ENCODE measurements at regions of chr3 and their contacts with region 1.

Region 1: DNA sequence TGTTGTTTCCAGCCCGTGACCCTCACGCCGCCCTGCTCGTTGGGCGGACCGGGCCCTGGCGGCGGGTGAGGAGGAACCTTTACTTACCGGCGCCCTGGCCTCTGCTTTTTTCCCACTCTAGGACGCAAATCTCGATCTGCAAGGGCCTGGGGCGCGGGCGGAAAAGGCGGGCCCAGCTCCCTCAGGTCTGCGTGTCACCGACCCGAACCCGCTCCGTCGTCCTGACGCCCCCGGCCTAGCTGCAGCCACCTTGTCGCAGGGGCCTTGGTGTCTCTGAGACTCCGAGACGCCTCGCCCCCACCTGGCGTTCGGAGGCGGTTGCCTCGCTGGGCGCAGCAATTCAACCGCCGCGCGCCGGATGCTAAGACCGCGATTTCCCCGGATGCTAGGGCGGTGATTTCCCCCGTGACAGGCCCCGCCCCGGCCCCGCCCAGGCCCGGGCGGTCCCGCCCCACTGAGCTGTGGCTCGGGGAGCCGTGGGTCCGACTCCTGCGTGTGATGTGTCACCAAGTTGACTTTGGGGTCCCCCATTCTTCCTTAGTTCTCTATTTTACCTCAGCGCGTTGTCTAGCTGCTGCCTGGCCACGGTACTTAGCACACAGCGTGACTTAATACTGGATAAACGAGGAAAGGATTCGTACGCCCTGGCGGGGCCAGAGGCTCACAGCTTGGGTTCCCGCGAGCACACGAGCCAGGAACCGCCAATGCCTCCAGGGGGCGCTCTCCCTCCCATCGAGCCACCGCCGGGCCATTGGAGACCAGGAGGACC is at the start of gene RPL39L:
- DNase-seq: peak; percentile 96
- ATAC-seq: peak; percentile 96
- H3K4me3 Mint-ChIP-seq: peak within 1 kb of the TSS; percentile 83
- H3K27ac Mint-ChIP-seq: peak within 1 kb of the TSS; percentile 97
- H3K4me1 Mint-ChIP-seq: peaks cover 19% of the 10 kb centered on the region
- H3K27me3 Mint-ChIP-seq: no peaks in the 10 kb centered on the region
- CTCF ChIP-seq: peak; percentile 97
- total RNA-seq, gene RPL39L: 12.1 to 16.2 TPM

Region 2: DNA sequence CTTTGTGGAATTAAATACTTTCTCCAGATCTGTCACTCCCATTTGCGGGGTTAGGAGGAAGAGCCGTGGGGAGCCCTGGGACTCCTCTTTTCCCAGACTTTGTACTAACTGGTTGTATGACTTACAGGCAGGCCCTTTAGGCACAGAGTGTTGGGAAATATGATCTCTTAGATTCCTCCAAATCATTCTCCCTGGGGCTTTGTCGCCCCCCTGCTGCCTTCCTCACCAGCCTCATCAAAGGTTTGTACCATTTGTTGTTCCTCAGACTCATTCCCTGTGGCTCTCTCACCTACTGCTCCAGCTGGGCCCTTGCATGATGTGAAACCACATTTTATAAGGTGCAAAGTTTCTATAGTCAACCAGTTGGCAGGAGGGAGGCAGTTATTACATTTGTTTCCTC is 651.5 kb before region 1 on chr3:
- CTCF ChIA-PET with region 1: no interaction called
- POLR2A ChIA-PET with region 1: no interaction called
- intact Hi-C with region 1: no loop called
- DNase-seq: no peak
- ATAC-seq: no peak
- H3K4me3 Mint-ChIP-seq: no peak overlapping the region
- H3K27ac Mint-ChIP-seq: no peak overlapping the region
- H3K4me1 Mint-ChIP-seq: peaks cover 7% of the 10 kb centered on the region
- H3K27me3 Mint-ChIP-seq: no peaks in the 10 kb centered on the region
- CTCF ChIP-seq: no peak

Region 3: GRCh38 chr3:187101184-187102072 is 37.9 kb before region 1 on chr3:
- CTCF ChIA-PET with region 1: interaction called, 29 read pairs
- POLR2A ChIA-PET with region 1: no interaction called
- intact Hi-C with region 1: no loop called
- DNase-seq: peak; percentile 66
- ATAC-seq: peak; percentile 73
- H3K4me3 Mint-ChIP-seq: no peak overlapping the region
- H3K27ac Mint-ChIP-seq: peak overlapping the region; percentile 26
- H3K4me1 Mint-ChIP-seq: peaks cover 29% of the 10 kb centered on the region
- H3K27me3 Mint-ChIP-seq: no peaks in the 10 kb centered on the region
- CTCF ChIP-seq: no peak

Region 4: DNA sequence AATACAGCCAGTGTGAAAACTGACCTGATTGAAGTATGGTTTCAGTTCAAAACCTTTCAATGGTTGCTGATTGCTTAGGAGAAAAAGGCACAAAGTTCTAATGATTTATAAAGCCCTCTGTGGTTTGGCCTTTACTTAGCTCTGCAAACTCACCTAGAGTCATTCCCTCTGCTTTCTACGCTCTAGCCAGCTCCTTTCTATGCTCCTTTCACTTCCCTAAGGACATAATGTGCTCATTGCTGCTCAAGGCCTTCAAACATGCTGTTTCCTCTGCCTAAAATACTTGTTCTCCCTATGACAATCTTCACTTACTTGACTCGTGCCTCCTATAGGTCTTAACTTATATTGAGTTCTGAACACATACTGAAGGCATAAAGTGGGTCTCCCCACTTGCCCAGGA is 19.0 kb before region 1 on chr3:
- CTCF ChIA-PET with region 1: interaction called, 10 read pairs
- POLR2A ChIA-PET with region 1: no interaction called
- intact Hi-C with region 1: no loop called
- DNase-seq: no peak
- ATAC-seq: no peak
- H3K4me3 Mint-ChIP-seq: no peak overlapping the region
- H3K27ac Mint-ChIP-seq: no peak overlapping the region
- H3K4me1 Mint-ChIP-seq: peaks cover under 1% of the 10 kb centered on the region
- H3K27me3 Mint-ChIP-seq: no peaks in the 10 kb centered on the region
- CTCF ChIP-seq: no peak

Region 5: DNA sequence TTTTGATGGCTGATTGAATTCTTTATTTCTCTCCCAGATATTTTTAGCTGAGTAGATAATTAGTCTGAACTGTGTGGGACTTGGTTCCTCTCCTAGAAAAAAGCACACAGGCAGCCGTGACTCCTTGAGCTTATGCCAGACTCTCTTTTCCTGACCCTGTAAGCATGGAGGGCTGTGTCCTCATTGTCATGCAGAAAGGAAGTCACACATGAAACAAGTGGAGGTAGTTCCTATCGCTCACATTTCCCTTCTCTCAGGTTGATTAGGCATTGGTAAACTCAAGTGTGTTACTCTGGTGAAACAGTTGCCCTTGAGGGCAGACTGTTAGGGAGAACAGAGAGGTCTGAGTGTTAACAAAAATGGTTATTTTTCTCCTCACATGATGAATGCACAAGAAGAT is 222.5 kb after region 1 on chr3:
- CTCF ChIA-PET with region 1: no interaction called
- POLR2A ChIA-PET with region 1: no interaction called
- intact Hi-C with region 1: no loop called
- DNase-seq: no peak
- ATAC-seq: peak; percentile 62
- H3K4me3 Mint-ChIP-seq: no peak overlapping the region
- H3K27ac Mint-ChIP-seq: no peak overlapping the region
- H3K4me1 Mint-ChIP-seq: peaks cover 7% of the 10 kb centered on the region
- H3K27me3 Mint-ChIP-seq: no peaks in the 10 kb centered on the region
- CTCF ChIP-seq: no peak

Region 6: DNA sequence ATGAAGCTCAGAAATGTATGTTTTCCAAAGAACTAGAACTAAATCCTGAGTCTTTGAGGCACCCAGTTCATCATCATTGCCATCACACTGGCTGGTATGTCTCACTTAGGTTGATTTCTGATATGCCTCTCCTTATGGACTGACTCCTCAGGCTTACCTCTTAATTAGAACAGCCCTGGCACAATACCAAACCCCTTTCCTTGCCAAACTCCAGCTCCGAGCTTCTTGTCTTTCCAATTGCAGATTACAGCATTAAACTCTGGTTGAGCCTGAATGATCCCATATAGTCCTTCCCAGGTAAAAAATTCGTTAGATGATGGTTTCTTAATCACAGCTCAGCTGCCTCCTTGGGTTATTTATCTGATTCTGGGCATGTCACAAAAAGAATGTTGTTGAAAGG is 295.2 kb after region 1 on chr3:
- CTCF ChIA-PET with region 1: no interaction called
- POLR2A ChIA-PET with region 1: no interaction called
- intact Hi-C with region 1: no loop called
- DNase-seq: no peak
- ATAC-seq: no peak
- H3K4me3 Mint-ChIP-seq: no peak overlapping the region
- H3K27ac Mint-ChIP-seq: no peak overlapping the region
- H3K4me1 Mint-ChIP-seq: no peaks in the 10 kb centered on the region
- H3K27me3 Mint-ChIP-seq: peaks cover 11% of the 10 kb centered on the region
- CTCF ChIP-seq: no peak